Activated naive CD4-positive, alpha-beta T cell treated with anti-CD3 and anti-CD28 coated beads, Interleukin-2, amount 10 ng/mL, durations not matched to agents 7 days and 5 days (primary cell): ENCODE measurements at regions of chr18 and their contacts with region 1.

Region 1: GRCh38 chr18:69935319-69936190 is 12.1 kb downstream of the CD226 start:
- DNase-seq: peak; percentile 86
- H3K4me3 Mint-ChIP-seq: no peak overlapping the region
- H3K27ac Mint-ChIP-seq: no peak overlapping the region
- H3K4me1 Mint-ChIP-seq: peaks cover 14% of the 10 kb centered on the region
- H3K27me3 Mint-ChIP-seq: no peaks in the 10 kb centered on the region

Region 2: DNA sequence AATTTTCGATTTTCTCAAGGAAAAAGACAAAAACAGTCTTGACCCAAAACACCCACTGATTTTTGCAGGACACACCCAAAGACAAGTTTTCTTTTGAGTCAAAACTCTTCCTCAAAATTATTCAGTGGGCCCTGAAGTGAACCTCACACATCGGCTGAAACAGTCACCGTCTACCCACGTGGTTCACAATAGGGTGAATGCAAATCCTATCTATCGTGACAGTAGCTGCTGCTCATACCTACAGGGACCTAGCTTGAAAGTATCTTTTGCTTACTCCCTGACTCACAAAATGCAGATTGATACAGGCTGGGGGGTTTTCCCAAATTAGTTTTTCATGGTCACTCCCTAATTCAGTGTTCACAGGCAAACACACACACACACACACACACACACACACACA is 22.9 kb after region 1 on chr18:
- CTCF ChIA-PET with region 1: interaction called, 14 read pairs
- DNase-seq: no peak
- H3K4me3 Mint-ChIP-seq: no peak overlapping the region
- H3K27ac Mint-ChIP-seq: no peak overlapping the region
- H3K4me1 Mint-ChIP-seq: peaks cover 17% of the 10 kb centered on the region
- H3K27me3 Mint-ChIP-seq: no peaks in the 10 kb centered on the region

Region 3: DNA sequence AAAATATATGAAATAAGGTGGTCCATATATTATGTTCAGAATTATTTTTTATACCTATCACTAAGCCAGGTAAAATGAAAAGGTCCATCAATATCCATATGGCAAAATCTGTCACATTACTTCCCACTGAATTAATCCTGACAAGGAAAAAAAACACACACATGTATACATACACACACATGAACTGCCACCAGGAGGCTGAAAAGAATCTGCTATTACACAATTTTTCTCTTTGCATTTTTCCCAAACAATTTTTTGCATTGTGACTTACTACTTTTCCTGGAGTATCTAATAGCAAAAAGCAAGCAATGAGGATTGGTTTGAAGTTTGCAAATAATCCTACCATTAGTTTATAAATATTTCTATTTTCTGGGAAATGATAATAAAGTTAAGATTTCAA is 140.4 kb after region 1 on chr18:
- CTCF ChIA-PET with region 1: no interaction called
- DNase-seq: no peak
- H3K4me3 Mint-ChIP-seq: no peak overlapping the region
- H3K27ac Mint-ChIP-seq: no peak overlapping the region
- H3K4me1 Mint-ChIP-seq: no peaks in the 10 kb centered on the region
- H3K27me3 Mint-ChIP-seq: no peaks in the 10 kb centered on the region